WTC11 (cell line): ENCODE measurements at regions of chr17 and their contacts with region 1.

Region 1: DNA sequence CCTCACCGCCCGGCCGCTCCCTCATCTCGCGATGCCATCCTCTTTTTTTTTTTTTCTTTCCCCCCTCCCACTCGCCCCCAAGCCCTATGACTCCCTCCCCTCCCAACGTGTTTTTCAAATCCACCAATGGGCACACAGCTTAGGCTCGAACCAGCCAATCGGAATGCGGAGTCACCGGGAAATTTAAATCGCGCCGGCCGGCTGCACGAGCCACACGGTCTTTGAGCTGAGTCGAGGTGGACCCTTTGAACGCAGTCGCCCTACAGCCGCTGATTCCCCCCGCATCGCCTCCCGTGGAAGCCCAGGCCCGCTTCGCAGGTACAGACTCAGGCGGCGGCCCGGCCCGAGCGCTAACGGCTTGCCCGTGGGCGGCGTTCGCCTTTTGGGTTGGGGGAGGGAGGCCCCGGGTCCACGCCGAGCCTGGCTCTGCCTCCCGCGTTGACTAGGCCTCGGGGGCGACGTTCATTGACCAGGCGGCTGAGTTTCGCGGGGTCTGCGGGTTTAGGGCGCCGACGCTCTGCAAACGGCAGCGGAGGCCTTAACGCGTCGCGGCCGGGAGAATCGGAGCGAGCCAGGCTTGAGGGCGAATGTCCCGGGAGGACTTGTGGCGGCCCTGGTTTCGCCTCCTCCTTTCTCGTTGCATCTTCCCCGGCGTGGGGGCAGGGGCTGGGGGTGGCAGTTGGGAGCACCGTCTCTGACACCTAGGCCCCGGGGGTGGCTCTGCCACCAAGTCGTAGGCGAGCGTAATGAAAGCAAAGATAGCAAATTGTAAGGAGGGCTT is at the start of gene KPNA2:
- DNase-seq: peak; percentile 90
- ATAC-seq: peak; percentile 80
- H3K4me3 Mint-ChIP-seq: peak within 1 kb of the TSS; percentile 97
- H3K27ac Mint-ChIP-seq: peak within 1 kb of the TSS; percentile 98
- H3K4me1 Mint-ChIP-seq: peaks cover 39% of the 10 kb centered on the region
- H3K27me3 Mint-ChIP-seq: no peaks in the 10 kb centered on the region
- CTCF ChIP-seq: no peak
- total RNA-seq, gene KPNA2: 426 to 466 TPM (median 431 TPM) in 3 replicates

Region 2: GRCh38 chr17:67974598-67975066 is 61.1 kb before region 1 on chr17:
- CTCF ChIA-PET with region 1: interaction called, 3 read pairs
- POLR2A ChIA-PET with region 1: interaction called, 10 read pairs
- DNase-seq: peak; percentile 84
- ATAC-seq: peak; percentile 98
- H3K4me3 Mint-ChIP-seq: peak overlapping the region; percentile 85
- H3K27ac Mint-ChIP-seq: peak overlapping the region; percentile 100
- H3K4me1 Mint-ChIP-seq: peaks cover 30% of the 10 kb centered on the region
- H3K27me3 Mint-ChIP-seq: no peaks in the 10 kb centered on the region
- CTCF ChIP-seq: no peak

Region 3: GRCh38 chr17:68019675-68020408 is 15.9 kb before region 1 on chr17:
- CTCF ChIA-PET with region 1: interaction called, 7 read pairs
- POLR2A ChIA-PET with region 1: interaction called, 16 read pairs
- DNase-seq: peak; percentile 99
- ATAC-seq: peak; percentile 84
- H3K4me3 Mint-ChIP-seq: peak overlapping the region; percentile 83
- H3K27ac Mint-ChIP-seq: peak overlapping the region; percentile 88
- H3K4me1 Mint-ChIP-seq: peaks cover 8% of the 10 kb centered on the region
- H3K27me3 Mint-ChIP-seq: no peaks in the 10 kb centered on the region
- CTCF ChIP-seq: no peak

Region 4: DNA sequence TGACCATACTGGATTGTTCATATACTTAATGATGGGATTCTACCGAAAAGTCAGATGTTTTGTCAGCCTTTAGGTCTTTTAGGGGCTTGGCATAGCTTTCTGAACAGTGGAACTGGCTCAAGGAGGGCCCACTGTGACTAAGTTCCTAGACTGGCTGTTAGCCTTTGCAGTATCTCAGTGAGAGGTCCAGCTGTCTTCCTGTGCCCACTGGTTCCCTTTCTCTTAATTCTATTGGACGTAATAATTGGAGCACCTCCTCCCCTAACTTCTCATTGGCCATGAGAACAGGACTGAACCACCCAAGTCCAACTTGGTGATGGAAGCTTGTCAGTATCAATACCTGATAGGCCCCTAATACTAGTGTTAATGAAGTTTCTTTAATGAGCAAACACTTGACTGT is 13.3 kb after region 1 on chr17:
- CTCF ChIA-PET with region 1: no interaction called
- POLR2A ChIA-PET with region 1: interaction called, 10 read pairs
- DNase-seq: no peak
- ATAC-seq: peak; percentile 85
- H3K4me3 Mint-ChIP-seq: no peak overlapping the region
- H3K27ac Mint-ChIP-seq: peak overlapping the region; percentile 86
- H3K4me1 Mint-ChIP-seq: peaks cover 7% of the 10 kb centered on the region
- H3K27me3 Mint-ChIP-seq: no peaks in the 10 kb centered on the region
- CTCF ChIP-seq: no peak